PC-9 (cell line): ENCODE measurements at regions of chr19 and their contacts with region 1.

Region 1: GRCh38 chr19:40425450-40426287 is at the start of gene SERTAD1:
- DNase-seq: peak; percentile 96 to 99
- H3K4me3 ChIP-seq: peak within 1 kb of the TSS; percentile 87
- H3K27ac ChIP-seq: peak within 1 kb of the TSS; percentile 92
- H3K4me1 ChIP-seq: peaks cover 12% of the 10 kb centered on the region
- H3K27me3 ChIP-seq: no peaks in the 10 kb centered on the region
- CTCF ChIP-seq: peak; percentile 81
- total RNA-seq, gene SERTAD1: 7.8 and 8.5 TPM in 2 replicates

Region 2: DNA sequence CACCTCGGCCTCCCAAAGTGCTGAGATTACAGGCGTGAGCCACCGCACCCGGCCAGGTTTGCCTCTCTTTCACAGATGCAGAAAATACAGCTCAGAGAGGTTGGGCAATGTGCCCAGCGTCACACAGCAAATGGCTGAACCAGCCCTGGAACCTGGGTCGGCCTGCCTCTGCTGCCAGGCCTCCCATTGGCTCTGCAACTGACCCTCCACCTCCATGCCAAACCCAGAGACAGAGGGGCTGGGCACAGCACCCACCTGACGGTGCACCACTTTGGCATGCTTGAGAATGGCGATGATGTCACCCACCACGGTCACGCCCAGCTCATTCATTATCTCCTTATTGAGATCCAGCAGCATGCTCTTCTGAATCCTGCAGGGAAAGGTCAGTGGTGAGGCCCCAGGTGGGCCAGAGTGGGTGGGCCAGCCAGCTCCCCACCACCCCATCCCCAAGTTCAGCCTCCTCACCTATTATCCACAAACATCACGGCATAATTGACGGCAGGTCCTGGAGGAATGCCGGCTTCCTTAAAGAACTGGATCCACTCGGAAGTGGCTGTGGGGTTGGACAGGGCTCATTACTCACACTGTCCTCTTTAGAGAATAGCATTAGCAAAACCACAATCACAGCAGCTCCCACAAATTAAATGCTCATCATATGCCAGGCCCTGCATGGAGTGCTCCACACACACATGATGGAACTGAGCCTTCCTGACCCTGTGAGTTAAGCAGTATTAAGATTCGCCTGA is 89.6 kb before region 1 on chr19:
- CTCF ChIA-PET with region 1: no interaction called
- POLR2A ChIA-PET with region 1: no interaction called
- intact Hi-C with region 1: no loop called
- DNase-seq: no peak
- H3K4me3 ChIP-seq: no peak overlapping the region
- H3K27ac ChIP-seq: no peak overlapping the region
- H3K4me1 ChIP-seq: no peaks in the 10 kb centered on the region
- H3K27me3 ChIP-seq: no peaks in the 10 kb centered on the region
- CTCF ChIP-seq: no peak

Region 3: GRCh38 chr19:40348125-40348913 is 77.3 kb before region 1 on chr19 and contains the starts of genes C19orf47 and PLD3:
- CTCF ChIA-PET with region 1: no interaction called
- POLR2A ChIA-PET with region 1: interaction called, 19 read pairs
- intact Hi-C with region 1: no loop called
- DNase-seq: peak; percentile 95 to 99
- H3K4me3 ChIP-seq: peak within 1 kb of the TSS; percentile 96
- H3K27ac ChIP-seq: peak within 1 kb of the TSS; percentile 32; the same call in 1 of the 2 replicates
- H3K4me1 ChIP-seq: peaks cover 17% of the 10 kb centered on the region; the same call in 1 of the 2 replicates
- H3K27me3 ChIP-seq: no peaks in the 10 kb centered on the region
- CTCF ChIP-seq: no peak
- total RNA-seq, gene C19orf47: 17.3 and 21.2 TPM in 2 replicates
- total RNA-seq, gene PLD3: 146 and 187 TPM in 2 replicates

Region 4: DNA sequence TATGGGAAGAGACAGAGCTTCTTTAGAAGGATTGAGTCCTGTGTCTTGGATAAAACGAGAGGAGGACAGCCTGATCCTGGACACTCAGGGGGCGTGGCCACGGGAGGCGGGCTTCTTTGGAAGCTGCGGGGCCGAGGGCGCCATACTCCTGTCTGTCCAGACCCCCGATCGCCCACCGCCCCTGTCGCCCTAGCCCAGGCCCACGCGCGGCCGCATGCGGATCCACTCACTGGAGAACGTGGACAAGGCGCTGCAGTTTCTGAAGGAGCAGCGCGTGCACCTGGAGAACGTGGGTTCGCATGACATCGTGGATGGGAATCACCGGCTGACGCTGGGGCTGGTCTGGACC is 64.2 kb after region 1 on chr19:
- CTCF ChIA-PET with region 1: no interaction called
- POLR2A ChIA-PET with region 1: interaction called, 18 read pairs
- intact Hi-C with region 1: no loop called
- DNase-seq: no peak
- H3K4me3 ChIP-seq: no peak overlapping the region
- H3K27ac ChIP-seq: no peak overlapping the region
- H3K4me1 ChIP-seq: no peaks in the 10 kb centered on the region
- H3K27me3 ChIP-seq: peaks cover 10% of the 10 kb centered on the region
- CTCF ChIP-seq: no peak

Region 5: GRCh38 chr19:40553885-40554857 is 128.5 kb after region 1 on chr19:
- CTCF ChIA-PET with region 1: no interaction called
- POLR2A ChIA-PET with region 1: no interaction called
- intact Hi-C with region 1: no loop called
- DNase-seq: no peak
- H3K4me3 ChIP-seq: no peak overlapping the region
- H3K27ac ChIP-seq: no peak overlapping the region
- H3K4me1 ChIP-seq: no peaks in the 10 kb centered on the region
- H3K27me3 ChIP-seq: peaks cover 38% of the 10 kb centered on the region
- CTCF ChIP-seq: no peak

Region 6: GRCh38 chr19:40609561-40610395 is 184.1 kb after region 1 on chr19:
- CTCF ChIA-PET with region 1: interaction called, 8 read pairs
- POLR2A ChIA-PET with region 1: interaction called, 4 read pairs
- intact Hi-C with region 1: loop called (anchors 5 kb)
- DNase-seq: peak; percentile 77 to 95
- H3K4me3 ChIP-seq: peak overlapping the region; percentile 63
- H3K27ac ChIP-seq: no peak overlapping the region
- H3K4me1 ChIP-seq: peaks cover 18% of the 10 kb centered on the region
- H3K27me3 ChIP-seq: no peaks in the 10 kb centered on the region
- CTCF ChIP-seq: no peak

Region 7: GRCh38 chr19:41016488-41017071 is 590.9 kb after region 1 on chr19:
- CTCF ChIA-PET with region 1: no interaction called
- POLR2A ChIA-PET with region 1: no interaction called
- intact Hi-C with region 1: no loop called
- DNase-seq: no peak
- H3K4me3 ChIP-seq: no peak overlapping the region
- H3K27ac ChIP-seq: no peak overlapping the region
- H3K4me1 ChIP-seq: no peaks in the 10 kb centered on the region
- H3K27me3 ChIP-seq: peaks cover 19% of the 10 kb centered on the region; the same call in 1 of the 2 replicates
- CTCF ChIP-seq: no peak

Region 8: DNA sequence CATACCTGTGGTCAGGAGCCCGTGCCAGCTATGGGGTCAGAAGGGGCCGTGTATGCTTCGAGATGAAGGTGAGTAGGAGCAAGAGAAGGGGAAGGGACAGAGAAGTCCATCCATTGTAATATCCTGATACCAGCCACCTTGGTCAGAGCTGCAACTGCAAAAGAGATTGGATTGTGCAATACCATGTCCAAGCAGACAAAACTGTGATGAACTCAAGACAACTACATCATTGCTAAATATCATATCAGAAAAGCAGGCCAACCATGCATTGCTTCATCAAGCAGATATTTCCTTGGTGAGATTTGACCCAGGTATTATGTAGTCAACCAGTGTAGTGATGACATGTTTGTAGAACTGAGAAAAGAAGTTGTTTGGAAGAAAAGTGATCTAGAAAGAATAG is 850.6 kb after region 1 on chr19:
- CTCF ChIA-PET with region 1: no interaction called
- POLR2A ChIA-PET with region 1: interaction called, 11 read pairs
- intact Hi-C with region 1: no loop called
- DNase-seq: no peak
- H3K4me3 ChIP-seq: no peak overlapping the region
- H3K27ac ChIP-seq: no peak overlapping the region
- H3K4me1 ChIP-seq: no peaks in the 10 kb centered on the region
- H3K27me3 ChIP-seq: no peaks in the 10 kb centered on the region
- CTCF ChIP-seq: no peak